Posterior cingulate gyrus (tissue), 11 donors: ENCODE measurements at regions of chr11 and their contacts with region 1.

Region 1: GRCh38 chr11:83819933-83820549 is 533.9 kb upstream of the CCDC90B start:
- DNase-seq: no peak

Region 2: GRCh38 chr11:82906244-82906654 is 913.8 kb before region 1 on chr11:
- intact Hi-C with region 1: loop called (anchors 5 kb)
- DNase-seq: no peak

Region 3: GRCh38 chr11:83292709-83293456 is 527.2 kb before region 1 on chr11:
- intact Hi-C with region 1: loop called (anchors 1 kb)
- DNase-seq: peak in 2 of 10 donors; percentile 8 to 44

Region 4: GRCh38 chr11:83521647-83522596 is 298.1 kb before region 1 on chr11:
- intact Hi-C with region 1: loop called (anchors 10 kb)
- DNase-seq: peak in 1 of 10 donors; percentile 25

Region 5: DNA sequence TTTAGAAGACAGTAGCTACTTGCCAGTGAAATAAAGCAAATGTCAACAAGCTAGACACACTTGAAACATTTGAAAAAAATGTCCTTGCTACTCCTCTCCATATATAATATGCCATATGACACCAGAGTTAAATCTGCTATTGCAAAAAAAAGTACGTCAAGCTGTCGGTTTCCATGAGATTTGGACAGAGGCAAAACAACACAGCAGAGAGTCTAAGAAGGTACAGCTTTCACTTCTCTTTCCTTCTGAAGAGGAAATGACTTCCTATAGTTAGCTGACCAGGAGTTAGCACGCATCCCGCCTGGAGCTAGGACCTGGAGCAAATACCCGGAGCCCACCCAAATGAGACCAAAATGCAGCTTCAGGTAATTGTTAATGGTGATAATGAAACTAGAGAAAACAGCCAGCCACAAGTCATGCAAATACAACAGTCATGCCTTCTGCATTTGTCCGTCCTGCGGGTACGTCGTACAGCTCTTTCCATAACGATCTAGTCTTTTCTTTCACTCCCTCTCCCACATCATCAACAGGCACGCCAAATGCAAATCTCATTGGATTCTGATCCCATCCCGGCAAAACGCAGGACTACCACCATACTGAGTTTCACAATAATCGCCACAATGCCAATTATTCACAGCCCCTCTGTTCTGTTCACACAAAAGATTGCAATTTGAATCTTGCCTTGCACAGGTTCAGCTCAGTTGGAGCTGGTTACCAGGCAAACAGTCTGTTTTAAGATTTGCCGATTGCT is 138.8 kb before region 1 on chr11:
- intact Hi-C with region 1: loop called (anchors 10 kb)
- DNase-seq: peak in 1 of 10 donors; percentile 12

Region 6: DNA sequence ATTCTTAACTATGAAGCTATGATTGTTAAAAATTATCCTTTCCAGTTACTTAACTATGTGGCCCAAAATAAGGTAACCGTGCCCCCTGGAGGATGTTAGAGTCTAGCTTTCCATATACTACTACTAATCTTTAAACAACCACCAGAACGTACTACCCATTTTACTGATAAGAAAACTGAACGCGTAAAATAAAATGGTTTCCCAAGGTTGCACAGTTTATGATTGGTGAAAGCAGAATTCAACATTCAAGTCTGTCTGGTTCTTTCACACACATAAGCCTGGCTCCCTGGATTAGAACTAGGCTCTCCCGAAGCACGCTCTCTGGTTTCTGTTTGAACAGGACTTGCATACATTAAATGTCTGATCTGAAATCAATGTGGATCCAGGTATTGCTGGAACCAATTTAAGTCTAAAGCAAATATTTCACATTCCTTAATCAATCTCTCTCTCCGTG is 96.0 kb before region 1 on chr11:
- intact Hi-C with region 1: loop called (anchors 10 kb)
- DNase-seq: no peak